ENCODE measurements at regions of chr17 and their contacts with region 1.

Region 1: GRCh38 chr17:59331129-59331928 is at the start of gene YPEL2:
- DNase-seq: peak; percentile 84 to 95
- H3K4me3 ChIP-seq: peak within 1 kb of the TSS; percentile 74
- H3K27ac ChIP-seq: peak within 1 kb of the TSS; percentile 50
- H3K4me1 ChIP-seq: peaks cover 32% of the 10 kb centered on the region
- H3K27me3 ChIP-seq: no peaks in the 10 kb centered on the region
- CTCF ChIP-seq: no peak
- total RNA-seq, gene YPEL2: 11.6 and 12.9 TPM in 2 replicates

Region 2: GRCh38 chr17:59366773-59367657 is 35.7 kb after region 1 on chr17:
- CTCF ChIA-PET with region 1: no interaction called
- POLR2A ChIA-PET with region 1: interaction called, 5 read pairs
- intact Hi-C with region 1: loop called (anchors 2 kb)
- DNase-seq: peak in 1 of 2 experiments; percentile 80
- H3K4me3 ChIP-seq: peak overlapping the region; percentile 3; the same call in 1 of the 2 replicates
- H3K27ac ChIP-seq: peak overlapping the region; percentile 81
- H3K4me1 ChIP-seq: peaks cover 71% of the 10 kb centered on the region
- H3K27me3 ChIP-seq: no peaks in the 10 kb centered on the region
- CTCF ChIP-seq: no peak

Region 3: GRCh38 chr17:59397316-59398073 is 66.2 kb after region 1 on chr17:
- CTCF ChIA-PET with region 1: no interaction called
- POLR2A ChIA-PET with region 1: no interaction called
- intact Hi-C with region 1: no loop called
- DNase-seq: no peak
- H3K4me3 ChIP-seq: no peak overlapping the region
- H3K27ac ChIP-seq: no peak overlapping the region
- H3K4me1 ChIP-seq: no peaks in the 10 kb centered on the region
- H3K27me3 ChIP-seq: no peaks in the 10 kb centered on the region
- CTCF ChIP-seq: no peak

Region 4: GRCh38 chr17:59415397-59415796 is 84.1 kb after region 1 on chr17:
- CTCF ChIA-PET with region 1: no interaction called
- POLR2A ChIA-PET with region 1: no interaction called
- intact Hi-C with region 1: no loop called
- DNase-seq: no peak
- H3K4me3 ChIP-seq: no peak overlapping the region
- H3K27ac ChIP-seq: no peak overlapping the region
- H3K4me1 ChIP-seq: no peaks in the 10 kb centered on the region
- H3K27me3 ChIP-seq: no peaks in the 10 kb centered on the region
- CTCF ChIP-seq: no peak

Region 5: GRCh38 chr17:59435238-59435637 is 103.9 kb after region 1 on chr17:
- CTCF ChIA-PET with region 1: interaction called, 5 read pairs
- POLR2A ChIA-PET with region 1: no interaction called
- intact Hi-C with region 1: loop called (anchors 1 kb)
- DNase-seq: peak; percentile 10 to 93
- H3K4me3 ChIP-seq: peak overlapping the region; percentile 25; the same call in 1 of the 2 replicates
- H3K27ac ChIP-seq: peak overlapping the region; percentile 61
- H3K4me1 ChIP-seq: peaks cover 31% of the 10 kb centered on the region
- H3K27me3 ChIP-seq: no peaks in the 10 kb centered on the region
- CTCF ChIP-seq: no peak

Measured in PC-9 (cell line).